Endothelial cell of umbilical vein (primary cell): ENCODE measurements at regions of chr15 and their contacts with region 1.

Region 1: DNA sequence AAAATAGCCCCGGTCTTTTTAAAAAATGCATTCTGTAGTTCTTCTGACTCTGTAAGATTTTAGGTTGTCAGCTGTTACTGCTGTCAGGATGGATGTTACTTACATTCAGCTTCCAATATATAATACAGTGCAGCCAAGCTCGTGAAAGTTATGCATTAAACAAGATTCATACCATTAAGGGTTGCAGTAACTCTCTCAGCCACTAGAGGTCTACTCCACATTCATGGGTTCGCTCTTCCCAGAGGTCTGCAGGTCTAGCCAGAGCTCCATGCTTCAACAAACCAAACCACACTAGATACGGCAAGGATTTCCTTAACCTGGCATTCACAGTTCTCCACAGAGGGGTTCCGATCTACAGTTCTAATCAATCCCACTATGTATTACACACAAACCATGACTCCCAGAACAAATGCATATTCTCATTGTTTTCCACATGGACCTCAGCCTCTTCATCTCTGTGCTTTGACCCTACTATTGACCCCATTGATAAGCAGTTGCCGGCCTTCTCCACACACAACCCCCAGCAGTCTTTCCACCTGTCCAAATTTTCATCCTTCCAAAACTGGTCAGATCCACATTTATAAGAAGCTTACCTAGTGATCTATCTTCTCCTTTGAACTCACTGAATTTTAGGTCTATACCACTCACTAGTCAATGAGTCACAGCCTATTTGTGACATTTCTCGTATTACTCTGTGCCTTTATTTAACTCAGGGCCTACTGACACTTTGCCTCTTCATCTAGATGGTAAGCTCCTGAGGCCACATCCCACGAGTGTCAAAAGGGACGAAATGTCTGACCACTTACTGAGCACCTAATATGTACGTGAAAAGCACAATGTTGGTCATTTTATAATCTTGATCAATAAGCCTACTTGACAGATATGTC is 33.7 kb downstream of the RORA start:
- DNase-seq: peak; percentile 49
- H3K4me3 ChIP-seq: no peak overlapping the region
- H3K27ac ChIP-seq: no peak overlapping the region
- H3K4me1 ChIP-seq: no peaks in the 10 kb centered on the region
- H3K27me3 ChIP-seq: peaks cover 0 to 4% of the 10 kb centered on the region in 2 experiments
- CTCF ChIP-seq: peak; percentile 57 to 75
- POLR2A ChIP-seq: no peak

Region 2: DNA sequence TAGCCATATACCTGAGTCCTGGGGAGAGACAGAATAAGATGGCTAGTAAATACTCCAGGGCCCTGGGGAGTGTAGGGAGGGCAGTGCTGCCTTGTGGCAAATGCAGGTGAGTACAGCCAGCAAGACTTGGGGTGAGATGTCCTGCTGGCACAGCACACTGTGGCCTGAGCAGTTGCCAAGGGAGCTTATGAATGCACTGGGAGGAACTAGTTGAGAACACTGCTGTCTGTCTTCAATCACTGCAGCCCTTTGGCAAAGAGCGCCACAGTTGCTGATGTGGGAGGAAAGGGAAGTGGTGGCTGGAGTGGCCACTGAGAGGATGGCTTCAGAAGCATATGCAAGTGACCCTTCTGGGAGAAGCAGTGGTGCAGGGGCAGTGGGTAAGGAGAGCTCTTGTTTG is 230.8 kb before region 1 on chr15:
- CTCF ChIA-PET with region 1: no interaction called
- POLR2A ChIA-PET with region 1: no interaction called
- dilution Hi-C with region 1: no loop called
- intact Hi-C with region 1: no loop called
- DNase-seq: no peak
- H3K4me3 ChIP-seq: no peak overlapping the region
- H3K27ac ChIP-seq: no peak overlapping the region
- H3K4me1 ChIP-seq: peaks cover 16% of the 10 kb centered on the region
- H3K27me3 ChIP-seq: no peaks in the 10 kb centered on the region
- CTCF ChIP-seq: no peak
- POLR2A ChIP-seq: no peak

Region 3: GRCh38 chr15:61169904-61170695 is 25.3 kb before region 1 on chr15:
- CTCF ChIA-PET with region 1: interaction called, 24 read pairs
- POLR2A ChIA-PET with region 1: no interaction called
- dilution Hi-C with region 1: no loop called
- intact Hi-C with region 1: no loop called
- DNase-seq: no peak
- H3K4me3 ChIP-seq: no peak overlapping the region
- H3K27ac ChIP-seq: no peak overlapping the region
- H3K4me1 ChIP-seq: peaks cover 13% of the 10 kb centered on the region
- H3K27me3 ChIP-seq: no peaks in the 10 kb centered on the region
- CTCF ChIP-seq: no peak
- POLR2A ChIP-seq: no peak

Region 4: DNA sequence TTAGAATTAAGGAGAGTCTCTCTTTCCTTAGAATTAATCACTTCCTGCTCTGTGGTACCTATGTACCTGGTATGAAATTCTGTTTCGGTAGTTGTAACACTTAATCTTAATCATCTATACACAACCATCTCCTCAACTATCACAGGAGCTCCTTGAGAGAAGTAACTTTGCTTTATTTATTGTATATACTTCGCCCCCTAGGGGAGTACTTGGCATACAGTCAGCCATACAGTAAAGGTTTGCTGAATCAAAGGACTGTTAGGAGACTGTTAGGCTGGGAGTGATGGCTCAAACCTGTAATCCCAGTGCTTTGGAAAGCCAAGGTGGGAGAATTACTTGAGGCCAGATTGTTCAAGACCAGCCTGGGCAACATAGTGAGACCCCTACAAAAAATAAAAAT is 10.9 kb before region 1 on chr15:
- CTCF ChIA-PET with region 1: interaction called, 31 read pairs
- POLR2A ChIA-PET with region 1: no interaction called
- dilution Hi-C with region 1: no loop called
- intact Hi-C with region 1: no loop called
- DNase-seq: no peak
- H3K4me3 ChIP-seq: no peak overlapping the region
- H3K27ac ChIP-seq: no peak overlapping the region
- H3K4me1 ChIP-seq: no peaks in the 10 kb centered on the region
- H3K27me3 ChIP-seq: peaks cover 1 to 11% of the 10 kb centered on the region in 2 experiments
- CTCF ChIP-seq: no peak
- POLR2A ChIP-seq: no peak

Region 5: DNA sequence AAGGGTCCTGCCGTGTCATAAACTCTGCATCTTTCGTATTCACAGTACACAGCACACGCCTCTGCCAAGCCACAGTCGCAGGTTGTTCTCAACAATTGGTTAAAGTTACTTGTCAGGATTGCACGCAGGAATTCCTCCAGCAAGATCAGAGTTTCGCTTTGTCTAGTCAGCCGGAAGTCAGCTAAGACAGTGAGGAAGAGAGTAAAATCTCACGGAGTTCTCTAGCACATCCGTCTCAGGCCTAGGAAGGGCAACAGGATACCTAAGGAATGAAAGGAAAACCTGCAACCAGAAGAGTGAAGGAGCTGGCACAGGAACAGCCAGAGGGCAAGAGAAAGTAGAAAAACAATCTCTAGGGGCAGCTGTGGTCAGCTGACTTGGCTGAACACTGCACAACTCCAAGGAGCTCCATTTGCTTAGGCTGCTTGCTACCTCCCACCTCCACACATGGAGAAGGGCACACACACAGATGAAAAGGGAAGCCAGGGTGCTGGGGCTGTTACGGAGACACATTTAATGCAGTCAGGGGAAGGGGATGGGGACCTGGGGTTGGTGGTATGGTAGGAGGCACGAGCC is 10.1 kb after region 1 on chr15:
- CTCF ChIA-PET with region 1: interaction called, 27 read pairs
- POLR2A ChIA-PET with region 1: no interaction called
- dilution Hi-C with region 1: no loop called
- intact Hi-C with region 1: no loop called
- DNase-seq: peak; percentile 38
- H3K4me3 ChIP-seq: peak overlapping the region in 2 of 3 experiments; percentile 13 to 41
- H3K27ac ChIP-seq: peak overlapping the region; percentile 2
- H3K4me1 ChIP-seq: peaks cover 13% of the 10 kb centered on the region
- H3K27me3 ChIP-seq: no peaks in the 10 kb centered on the region
- CTCF ChIP-seq: no peak
- POLR2A ChIP-seq: no peak

Region 6: GRCh38 chr15:61227269-61227949 is 32.0 kb after region 1 on chr15:
- CTCF ChIA-PET with region 1: interaction called, 30 read pairs
- POLR2A ChIA-PET with region 1: no interaction called
- dilution Hi-C with region 1: no loop called
- intact Hi-C with region 1: no loop called
- DNase-seq: peak; percentile 41
- H3K4me3 ChIP-seq: peak overlapping the region; percentile 53 to 84 (median 72)
- H3K27ac ChIP-seq: no peak overlapping the region
- H3K4me1 ChIP-seq: peaks cover 9% of the 10 kb centered on the region
- H3K27me3 ChIP-seq: peaks cover 25 to 28% of the 10 kb centered on the region in 2 experiments
- CTCF ChIP-seq: no peak
- POLR2A ChIP-seq: no peak

Region 7: GRCh38 chr15:61621146-61621545 is 425.8 kb after region 1 on chr15:
- CTCF ChIA-PET with region 1: interaction called, 102 read pairs
- POLR2A ChIA-PET with region 1: no interaction called
- dilution Hi-C with region 1: no loop called
- intact Hi-C with region 1: loop called (anchors 1 kb)
- DNase-seq: peak; percentile 21
- H3K4me3 ChIP-seq: no peak overlapping the region
- H3K27ac ChIP-seq: no peak overlapping the region
- H3K4me1 ChIP-seq: no peaks in the 10 kb centered on the region
- H3K27me3 ChIP-seq: no peaks in the 10 kb centered on the region
- CTCF ChIP-seq: peak; percentile 39 to 69
- POLR2A ChIP-seq: no peak

Region 8: GRCh38 chr15:61644550-61644949 is 449.2 kb after region 1 on chr15:
- CTCF ChIA-PET with region 1: interaction called, 14 read pairs
- POLR2A ChIA-PET with region 1: no interaction called
- dilution Hi-C with region 1: no loop called
- intact Hi-C with region 1: no loop called
- DNase-seq: no peak
- H3K4me3 ChIP-seq: no peak overlapping the region
- H3K27ac ChIP-seq: no peak overlapping the region
- H3K4me1 ChIP-seq: no peaks in the 10 kb centered on the region
- H3K27me3 ChIP-seq: no peaks in the 10 kb centered on the region
- CTCF ChIP-seq: no peak
- POLR2A ChIP-seq: no peak